ENCODE measurements at regions of chr6 and their contacts with region 1.

Region 1: GRCh38 chr6:145028144-145028818 is 707.0 kb downstream of the EPM2A start:
- DNase-seq: peak; percentile 75
- ATAC-seq: peak; percentile 80
- H3K4me3 ChIP-seq: no peak overlapping the region
- H3K27ac ChIP-seq: no peak overlapping the region
- H3K4me1 ChIP-seq: peaks cover 6% of the 10 kb centered on the region
- H3K27me3 ChIP-seq: no peaks in the 10 kb centered on the region
- CTCF ChIP-seq: peak; percentile 76

Region 2: GRCh38 chr6:144647971-144648651 is 380.2 kb before region 1 on chr6:
- CTCF ChIA-PET with region 1: no interaction called
- POLR2A ChIA-PET with region 1: no interaction called
- intact Hi-C with region 1: loop called (anchors 5 kb)
- DNase-seq: no peak
- ATAC-seq: no peak
- H3K4me3 ChIP-seq: no peak overlapping the region
- H3K27ac ChIP-seq: no peak overlapping the region
- H3K4me1 ChIP-seq: peaks cover 9% of the 10 kb centered on the region; the same call in 1 of the 2 replicates
- H3K27me3 ChIP-seq: no peaks in the 10 kb centered on the region
- CTCF ChIP-seq: peak; percentile 47; the same call in 1 of the 2 replicates

Region 3: GRCh38 chr6:144797881-144798595 is 230.2 kb before region 1 on chr6:
- CTCF ChIA-PET with region 1: no interaction called
- POLR2A ChIA-PET with region 1: no interaction called
- intact Hi-C with region 1: loop called (anchors 10 kb)
- DNase-seq: peak; percentile 95
- ATAC-seq: peak; percentile 87
- H3K4me3 ChIP-seq: peak overlapping the region; percentile 16; the same call in 1 of the 2 replicates
- H3K27ac ChIP-seq: peak overlapping the region; percentile 83
- H3K4me1 ChIP-seq: peaks cover 27% of the 10 kb centered on the region
- H3K27me3 ChIP-seq: no peaks in the 10 kb centered on the region
- CTCF ChIP-seq: no peak

Region 4: DNA sequence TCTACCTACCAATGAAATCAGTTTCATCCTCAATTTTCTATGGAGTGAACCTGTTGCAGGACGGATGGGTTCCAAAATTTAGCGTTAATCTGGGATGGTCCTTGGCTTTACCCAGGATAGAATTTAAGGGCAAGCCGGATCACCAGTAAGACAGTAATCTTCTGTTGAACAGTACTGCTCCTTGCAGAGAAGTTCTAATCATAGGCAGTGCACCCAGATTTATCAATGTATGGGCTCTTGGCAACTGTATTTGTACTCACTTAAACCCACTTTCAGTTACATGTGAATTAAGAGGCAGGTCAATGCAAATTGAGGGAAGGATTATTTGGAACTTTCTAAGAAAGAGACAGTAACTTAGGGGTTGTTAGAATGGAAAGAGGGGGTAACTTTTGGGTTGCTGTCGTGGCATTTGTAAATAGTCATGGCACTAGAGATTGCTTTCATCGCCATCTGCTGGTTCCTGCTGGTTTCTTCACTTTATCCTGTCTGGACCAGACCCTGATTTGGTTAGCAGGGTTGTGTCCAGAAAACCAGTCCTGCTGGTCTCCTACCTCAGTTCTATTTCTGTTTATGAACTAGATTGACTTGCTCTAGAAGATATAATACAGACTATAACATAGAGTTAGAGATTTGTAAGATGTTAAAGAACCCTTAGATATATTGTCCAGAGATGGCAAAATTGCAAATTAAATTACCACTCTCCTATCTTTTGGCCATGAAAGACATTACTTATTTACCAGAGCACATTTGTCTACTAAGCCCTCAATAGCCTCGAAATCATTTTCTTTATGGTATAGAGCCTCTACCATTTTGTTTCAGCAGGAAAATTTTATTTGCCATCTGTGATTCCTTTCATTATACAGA is 96.9 kb before region 1 on chr6:
- CTCF ChIA-PET with region 1: no interaction called
- POLR2A ChIA-PET with region 1: no interaction called
- intact Hi-C with region 1: loop called (anchors 1 kb)
- DNase-seq: peak; percentile 66
- ATAC-seq: peak; percentile 67
- H3K4me3 ChIP-seq: no peak overlapping the region
- H3K27ac ChIP-seq: peak overlapping the region; percentile 36
- H3K4me1 ChIP-seq: no peaks in the 10 kb centered on the region
- H3K27me3 ChIP-seq: no peaks in the 10 kb centered on the region
- CTCF ChIP-seq: peak; percentile 71

Region 5: DNA sequence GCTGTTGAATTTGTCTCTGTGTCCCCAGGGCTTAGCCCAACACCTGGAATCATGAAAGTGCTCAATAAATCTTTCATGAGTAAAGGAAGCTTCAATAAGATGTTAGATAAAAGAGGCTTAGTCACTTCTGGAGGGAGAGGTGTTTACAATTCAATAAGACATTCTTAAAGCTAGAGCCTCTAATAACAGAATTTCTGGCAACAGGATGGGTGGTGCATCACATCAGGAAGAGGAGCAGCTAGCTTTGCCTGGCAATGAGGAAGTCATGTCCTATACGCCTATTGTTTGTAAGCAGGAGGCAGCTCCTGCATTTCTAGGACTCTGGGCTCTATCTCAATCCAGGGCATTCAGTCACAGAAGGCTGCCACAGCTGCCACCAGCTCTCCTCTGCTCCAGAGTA is 68.6 kb after region 1 on chr6:
- CTCF ChIA-PET with region 1: no interaction called
- POLR2A ChIA-PET with region 1: no interaction called
- intact Hi-C with region 1: no loop called
- DNase-seq: peak; percentile 4
- ATAC-seq: no peak
- H3K4me3 ChIP-seq: no peak overlapping the region
- H3K27ac ChIP-seq: no peak overlapping the region
- H3K4me1 ChIP-seq: no peaks in the 10 kb centered on the region
- H3K27me3 ChIP-seq: no peaks in the 10 kb centered on the region
- CTCF ChIP-seq: no peak

Region 6: DNA sequence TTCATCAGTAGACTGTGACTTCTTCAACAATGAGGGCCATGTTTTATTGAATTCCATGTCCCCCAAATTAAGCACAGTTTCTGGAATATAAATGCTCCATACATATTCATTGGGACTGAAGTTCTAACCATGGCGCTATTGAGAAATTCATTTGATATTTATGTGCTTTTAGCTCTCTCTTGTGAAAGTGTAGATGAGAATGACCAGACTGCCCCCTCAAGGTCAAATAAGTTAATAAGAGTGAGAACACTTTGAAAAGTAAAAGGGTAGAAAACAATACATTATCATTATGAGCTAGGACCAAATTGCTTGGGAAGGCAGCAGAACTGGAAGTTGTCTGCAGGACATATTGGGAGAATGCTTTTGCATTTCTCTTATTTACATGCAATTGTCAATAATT is 109.1 kb after region 1 on chr6:
- CTCF ChIA-PET with region 1: no interaction called
- POLR2A ChIA-PET with region 1: no interaction called
- intact Hi-C with region 1: loop called (anchors 2 kb)
- DNase-seq: peak; percentile 42
- ATAC-seq: peak; percentile 35; the same call in 1 of the 2 replicates
- H3K4me3 ChIP-seq: no peak overlapping the region
- H3K27ac ChIP-seq: no peak overlapping the region
- H3K4me1 ChIP-seq: no peaks in the 10 kb centered on the region
- H3K27me3 ChIP-seq: no peaks in the 10 kb centered on the region
- CTCF ChIP-seq: peak; percentile 61

Region 7: GRCh38 chr6:145214570-145214969 is 186.3 kb after region 1 on chr6:
- CTCF ChIA-PET with region 1: no interaction called
- POLR2A ChIA-PET with region 1: no interaction called
- intact Hi-C with region 1: loop called (anchors 2 kb)
- DNase-seq: peak; percentile 53
- ATAC-seq: no peak
- H3K4me3 ChIP-seq: no peak overlapping the region
- H3K27ac ChIP-seq: no peak overlapping the region
- H3K4me1 ChIP-seq: no peaks in the 10 kb centered on the region
- H3K27me3 ChIP-seq: no peaks in the 10 kb centered on the region
- CTCF ChIP-seq: peak; percentile 66; the same call in 1 of the 2 replicates